ENCODE measurements at regions of chr12 and their contacts with region 1.

Region 1: DNA sequence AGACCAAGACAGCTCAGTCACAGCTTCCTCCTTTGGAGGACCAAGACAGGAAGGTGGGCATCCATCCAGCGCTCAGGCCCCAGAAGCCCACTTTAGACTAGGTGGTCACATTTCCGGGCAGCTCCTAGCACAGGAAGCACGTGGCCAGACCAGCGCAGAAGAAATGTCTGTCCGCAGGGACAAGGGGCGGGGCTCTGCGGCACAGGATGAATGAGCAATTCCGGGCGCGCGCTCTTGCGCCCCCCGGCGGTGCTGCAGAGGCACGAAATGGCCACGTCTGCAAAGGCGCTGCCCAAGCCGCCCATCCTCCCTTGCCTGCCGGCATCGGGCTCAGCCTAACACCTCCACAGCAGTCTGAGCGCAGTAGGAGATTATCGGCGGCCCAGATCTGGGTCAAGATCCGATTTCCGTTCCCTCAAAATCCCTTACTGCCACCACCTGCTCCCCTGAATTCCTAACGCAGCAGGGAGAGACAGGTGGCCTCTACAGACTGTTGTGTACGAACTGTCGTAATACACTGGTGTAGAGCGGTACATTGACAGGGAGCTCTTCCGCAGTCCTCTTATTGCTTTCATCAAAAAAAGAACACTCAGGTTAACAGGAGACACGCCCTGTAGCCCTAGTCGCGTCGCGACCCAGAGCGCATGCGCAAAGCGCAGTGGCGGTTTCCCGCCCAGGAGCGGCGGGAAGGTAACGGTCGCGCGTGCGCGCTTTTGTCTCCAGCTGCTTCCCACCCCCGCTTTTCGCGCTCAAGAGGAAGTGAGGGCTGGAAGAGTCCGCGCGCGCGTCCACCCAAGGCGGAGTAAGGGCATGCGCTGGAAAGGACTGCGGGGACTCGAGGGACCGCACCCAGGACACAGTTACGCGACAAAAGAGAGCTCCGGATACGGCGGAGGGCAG is 794 bp downstream of the TUBA1B start:
- DNase-seq: peak; percentile 95
- H3K4me3 ChIP-seq: peak overlapping the region; percentile 69 to 99 (median 73)
- H3K27ac ChIP-seq: peak overlapping the region; percentile 65
- H3K4me1 ChIP-seq: peaks cover 22% of the 10 kb centered on the region
- H3K27me3 ChIP-seq: no peaks in the 10 kb centered on the region
- CTCF ChIP-seq: peak; percentile 98 to 99
- POLR2A ChIP-seq: peak; percentile 86

Region 2: DNA sequence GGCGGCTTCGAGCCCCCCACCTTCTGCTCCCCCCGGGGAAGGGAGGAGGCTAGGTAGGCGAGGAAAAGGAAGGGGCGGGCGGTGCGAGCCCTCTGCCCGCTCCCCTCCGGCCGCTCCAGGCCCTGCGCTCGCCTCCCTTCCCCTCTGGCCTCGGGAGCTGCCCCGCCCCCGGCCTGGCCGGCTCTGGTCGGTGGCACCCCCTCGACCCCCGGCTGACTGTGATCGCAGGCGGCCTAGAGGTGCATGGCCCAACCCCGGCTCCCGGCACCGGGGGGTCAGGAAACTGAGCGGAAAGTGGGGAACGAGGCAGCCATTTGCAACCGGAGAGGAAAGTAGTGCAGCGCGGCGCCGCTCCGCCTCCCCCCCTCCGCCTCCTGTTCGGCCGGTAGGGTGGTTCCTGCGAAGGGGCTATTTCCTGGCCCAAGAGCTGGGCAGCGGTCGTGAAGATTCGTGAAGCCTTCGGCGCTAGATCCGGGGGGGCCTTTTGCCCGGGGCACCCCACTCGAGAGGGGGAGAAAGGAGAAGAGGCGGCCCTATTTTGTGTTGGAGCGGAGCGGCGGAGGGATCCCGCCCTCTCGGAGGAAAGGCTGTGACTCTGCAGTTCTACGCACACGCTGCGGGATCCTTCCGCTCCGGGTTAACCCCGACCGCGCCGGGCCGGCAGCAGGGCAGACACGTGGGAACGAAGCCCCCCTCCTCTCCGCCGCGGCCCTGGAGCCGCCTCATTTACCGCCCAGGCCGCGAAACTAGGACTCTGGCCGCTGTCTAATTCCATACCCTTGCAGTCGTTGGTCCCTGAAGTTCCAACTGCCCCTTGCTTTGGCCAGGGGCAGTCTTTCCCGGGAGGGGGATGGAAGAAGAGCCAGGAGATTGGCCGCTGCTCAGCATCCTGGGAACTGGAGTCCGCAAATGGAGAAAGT is 69.9 kb before region 1 on chr12 and contains the start of gene KMT2D:
- CTCF ChIA-PET with region 1: interaction called, 197 read pairs
- POLR2A ChIA-PET with region 1: interaction called, 6 read pairs
- dilution Hi-C with region 1: no loop called
- intact Hi-C with region 1: loop called (anchors 1 kb)
- DNase-seq: peak; percentile 92
- H3K4me3 ChIP-seq: peak within 1 kb of the TSS; percentile 73 to 97 (median 77)
- H3K27ac ChIP-seq: peak within 1 kb of the TSS; percentile 93
- H3K4me1 ChIP-seq: peaks cover 39% of the 10 kb centered on the region
- H3K27me3 ChIP-seq: no peaks in the 10 kb centered on the region
- CTCF ChIP-seq: peak; percentile 6 to 13
- POLR2A ChIP-seq: peak; percentile 85
- total RNA-seq, gene KMT2D: 106 and 120 TPM in 2 replicates

Region 3: GRCh38 chr12:49088190-49088931 is 42.0 kb before region 1 on chr12:
- CTCF ChIA-PET with region 1: interaction called, 46 read pairs
- POLR2A ChIA-PET with region 1: interaction called, 25 read pairs
- dilution Hi-C with region 1: no loop called
- intact Hi-C with region 1: loop called (anchors 2 kb)
- DNase-seq: peak; percentile 91
- H3K4me3 ChIP-seq: no peak overlapping the region
- H3K27ac ChIP-seq: no peak overlapping the region
- H3K4me1 ChIP-seq: peaks cover 39% of the 10 kb centered on the region
- H3K27me3 ChIP-seq: no peaks in the 10 kb centered on the region
- CTCF ChIP-seq: peak; percentile 90 to 95
- POLR2A ChIP-seq: no peak

Region 4: DNA sequence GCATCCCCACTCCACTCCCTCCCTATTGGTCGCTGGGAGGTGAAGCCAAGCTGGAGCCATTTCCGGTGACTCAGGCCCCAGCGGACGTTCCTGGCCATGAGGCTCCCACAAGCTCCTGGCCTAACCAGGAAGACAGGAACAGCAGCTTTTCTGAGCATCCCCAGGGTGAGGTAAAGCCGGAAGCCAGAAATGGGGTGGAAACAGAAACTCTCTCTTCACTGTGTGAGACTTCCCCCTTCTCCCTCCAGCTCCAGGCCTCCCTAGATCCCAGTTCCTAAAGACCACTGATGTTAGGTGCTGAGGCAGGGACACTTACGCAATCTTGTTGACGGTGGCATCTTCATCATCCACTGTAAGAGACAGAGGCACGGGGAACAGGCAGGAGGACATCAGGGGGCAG is 24.8 kb before region 1 on chr12:
- CTCF ChIA-PET with region 1: interaction called, 27 read pairs
- POLR2A ChIA-PET with region 1: interaction called, 27 read pairs
- dilution Hi-C with region 1: no loop called
- intact Hi-C with region 1: loop called (anchors 2 kb)
- DNase-seq: peak; percentile 37
- H3K4me3 ChIP-seq: no peak overlapping the region
- H3K27ac ChIP-seq: peak overlapping the region; percentile 54
- H3K4me1 ChIP-seq: peaks cover 38% of the 10 kb centered on the region
- H3K27me3 ChIP-seq: no peaks in the 10 kb centered on the region
- CTCF ChIP-seq: no peak
- POLR2A ChIP-seq: no peak

Region 5: DNA sequence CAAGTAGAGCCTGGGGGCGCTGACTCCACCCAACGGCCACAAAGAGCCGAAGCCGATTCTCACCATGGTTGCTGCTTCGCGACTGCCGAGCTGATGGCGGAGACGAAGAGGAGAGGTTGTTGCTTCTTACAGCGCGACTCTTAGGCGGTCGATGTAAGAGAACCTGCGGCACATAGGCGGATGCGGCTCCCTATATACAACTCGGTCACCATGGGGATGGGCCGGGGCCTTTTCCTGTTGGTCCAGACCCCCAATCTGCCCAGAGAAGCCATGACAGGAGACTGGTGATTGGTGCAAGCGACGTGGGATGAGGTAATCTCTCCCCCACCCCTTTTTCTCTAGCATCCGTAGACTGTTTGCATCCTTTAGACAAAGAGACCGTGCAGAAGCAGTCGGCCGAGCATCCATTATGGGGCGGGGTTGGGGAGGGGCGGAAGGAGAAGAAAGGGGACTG is 58.5 kb after region 1 on chr12 and contains the start of gene TUBA1A:
- CTCF ChIA-PET with region 1: interaction called, 19 read pairs
- POLR2A ChIA-PET with region 1: interaction called, 58 read pairs
- dilution Hi-C with region 1: no loop called
- intact Hi-C with region 1: loop called (anchors 1 kb)
- DNase-seq: peak; percentile 99
- H3K4me3 ChIP-seq: peak within 1 kb of the TSS; percentile 74 to 95 (median 89)
- H3K27ac ChIP-seq: peak within 1 kb of the TSS; percentile 95
- H3K4me1 ChIP-seq: peaks cover 28% of the 10 kb centered on the region
- H3K27me3 ChIP-seq: no peaks in the 10 kb centered on the region
- CTCF ChIP-seq: no peak
- POLR2A ChIP-seq: peak; percentile 100
- total RNA-seq, gene TUBA1A: 701 and 740 TPM in 2 replicates

Region 6: DNA sequence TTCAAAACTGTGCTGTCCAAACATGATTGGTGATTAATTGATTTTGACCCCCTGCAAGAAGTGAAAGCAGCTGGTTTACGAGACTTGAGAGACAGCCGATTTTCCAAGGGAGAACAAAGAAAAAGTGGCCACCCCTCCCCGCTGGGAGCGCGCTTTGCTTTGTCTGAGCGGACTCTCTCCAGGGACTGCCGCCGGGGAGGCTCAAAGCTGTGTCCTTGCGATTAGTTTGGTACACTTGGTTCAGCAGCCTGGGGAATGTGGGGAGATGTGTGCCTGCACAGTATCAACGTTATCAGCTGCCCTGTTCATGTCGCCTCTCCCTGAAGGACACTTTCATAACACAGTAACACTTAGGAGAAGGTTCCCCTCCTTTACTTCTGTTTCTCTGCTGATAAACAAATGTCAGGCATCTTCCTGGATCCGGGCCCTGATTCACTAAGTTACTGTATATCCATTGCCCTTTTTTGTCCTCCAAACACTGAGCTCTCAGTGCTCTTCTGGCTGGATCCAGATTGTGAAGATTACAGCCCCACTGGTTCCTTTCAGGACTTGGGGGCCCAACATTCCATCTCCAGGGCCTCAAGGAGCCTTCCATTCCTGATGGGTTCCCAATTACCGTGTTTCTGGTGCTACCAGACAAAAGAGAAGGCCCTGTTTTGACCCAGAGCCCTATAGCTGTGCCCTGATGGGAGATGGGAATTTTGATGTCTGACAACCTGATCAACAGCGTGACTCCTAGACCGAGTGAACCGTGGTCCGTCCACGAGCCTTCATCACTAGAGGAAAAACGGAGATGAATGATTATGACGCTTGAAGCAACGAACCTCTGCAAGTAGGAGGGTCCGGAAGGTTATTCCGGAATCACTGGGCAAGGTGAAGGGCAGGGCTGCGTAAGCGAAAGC is 102.8 kb after region 1 on chr12:
- CTCF ChIA-PET with region 1: interaction called, 40 read pairs
- POLR2A ChIA-PET with region 1: interaction called, 10 read pairs
- dilution Hi-C with region 1: no loop called
- intact Hi-C with region 1: loop called (anchors 1 kb)
- DNase-seq: peak; percentile 71
- H3K4me3 ChIP-seq: peak overlapping the region in 1 of 3 experiments; percentile 5
- H3K27ac ChIP-seq: no peak overlapping the region
- H3K4me1 ChIP-seq: peaks cover 12% of the 10 kb centered on the region
- H3K27me3 ChIP-seq: no peaks in the 10 kb centered on the region
- CTCF ChIP-seq: peak in 1 of 2 donors; percentile 34
- POLR2A ChIP-seq: no peak

Measured in endothelial cell of umbilical vein (primary cell).